ENCODE measurements at regions of chr14 and their contacts with region 1.

Region 1: GRCh38 chr14:68283378-68284123 is 464.0 kb downstream of the RAD51B start:
- DNase-seq: peak; percentile 95
- ATAC-seq: peak; percentile 57
- H3K4me3 ChIP-seq: no peak overlapping the region
- H3K27ac ChIP-seq: peak overlapping the region; percentile 92
- H3K4me1 ChIP-seq: peaks cover 89% of the 10 kb centered on the region
- H3K27me3 ChIP-seq: no peaks in the 10 kb centered on the region
- CTCF ChIP-seq: no peak
- EP300 ChIP-seq: peak; percentile 68 to 84
- POLR2A ChIP-seq: peak; percentile 78
- RAD21 ChIP-seq: peak; percentile 20; the same call in 1 of the 2 replicates

Region 2: DNA sequence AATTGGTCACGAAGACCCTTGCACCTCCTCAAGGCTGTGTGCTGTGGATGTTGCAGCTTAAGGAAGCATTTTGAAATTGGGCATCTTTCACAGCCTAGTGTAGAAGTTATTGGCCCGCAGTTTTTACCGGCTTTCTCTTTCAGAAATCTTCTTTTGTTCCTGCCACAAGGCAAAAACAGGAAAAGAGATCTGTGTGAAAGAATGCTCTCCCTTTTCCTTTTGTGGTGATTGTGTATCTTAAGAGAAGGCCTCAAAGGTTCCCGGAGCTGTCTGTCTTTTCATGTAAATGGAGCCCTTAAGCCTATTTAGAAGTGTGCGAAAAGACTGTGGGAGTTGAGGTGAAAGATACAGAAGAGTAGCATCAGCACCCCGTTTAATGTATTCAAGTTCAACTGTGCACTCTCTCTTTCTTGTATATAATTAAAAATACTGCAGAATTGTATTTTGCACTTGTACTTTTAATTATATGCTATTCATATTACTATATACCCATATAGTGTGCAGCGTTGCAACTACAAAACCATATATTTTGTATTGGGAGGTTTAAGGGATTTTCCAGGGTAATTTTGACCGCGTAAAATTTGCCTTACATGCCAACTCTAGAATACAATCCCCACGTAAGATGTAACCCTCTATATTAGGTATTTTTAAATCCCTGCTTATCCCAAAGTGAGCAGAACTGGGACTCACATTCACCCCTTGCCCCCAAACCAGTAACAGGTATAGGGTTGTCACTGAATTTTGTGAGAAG is 22.3 kb before region 1 on chr14:
- CTCF ChIA-PET with region 1: interaction called, 7 read pairs
- POLR2A ChIA-PET with region 1: interaction called, 6 read pairs
- RAD21 ChIA-PET with region 1: interaction called, 240 read pairs
- SMC1A ChIA-PET with region 1: interaction called, 106 read pairs
- in situ Hi-C with region 1: no loop called
- intact Hi-C with region 1: no loop called
- DNase-seq: no peak
- ATAC-seq: peak; percentile 60
- H3K4me3 ChIP-seq: peak overlapping the region; percentile 40; the same call in 1 of the 2 replicates
- H3K27ac ChIP-seq: peak overlapping the region; percentile 58
- H3K4me1 ChIP-seq: peaks cover 45% of the 10 kb centered on the region
- H3K27me3 ChIP-seq: no peaks in the 10 kb centered on the region
- CTCF ChIP-seq: no peak
- EP300 ChIP-seq: no peak
- POLR2A ChIP-seq: no peak
- RAD21 ChIP-seq: no peak

Region 3: DNA sequence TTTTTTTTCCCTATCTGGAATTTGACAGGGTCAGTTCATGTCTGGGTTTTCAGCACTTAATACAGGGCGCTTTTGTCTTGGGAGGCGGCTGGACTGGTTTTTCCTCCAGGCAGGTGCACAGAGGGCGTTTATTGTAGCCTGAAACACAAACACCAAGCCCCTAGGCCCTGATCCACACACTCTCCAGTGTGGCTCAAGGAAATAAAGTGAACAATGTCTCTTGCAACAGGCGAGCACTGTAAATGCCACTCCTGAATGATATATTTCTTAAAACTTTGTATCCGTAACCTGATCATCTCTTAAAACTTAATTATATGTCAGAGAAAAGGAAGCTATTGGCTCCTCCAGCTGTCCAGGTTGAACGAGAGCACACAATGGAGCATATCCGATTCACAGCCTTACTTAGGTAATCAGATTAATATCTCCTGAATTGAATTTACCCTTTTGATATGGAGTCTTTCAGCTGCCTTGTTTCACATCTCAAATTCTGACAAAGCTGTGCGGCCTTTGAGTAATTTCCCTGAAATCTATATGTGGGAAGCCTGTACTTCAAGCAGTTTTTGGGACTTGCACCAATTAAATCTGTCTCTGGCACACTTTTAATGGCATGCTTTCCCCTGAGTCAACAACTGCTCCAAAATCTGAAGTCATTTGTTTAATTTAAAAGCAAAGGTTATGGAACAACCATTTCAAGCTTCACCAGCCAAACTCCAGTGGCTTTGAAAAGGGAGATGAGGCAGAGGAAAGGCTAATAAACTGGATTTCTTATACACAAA is 23.7 kb after region 1 on chr14:
- CTCF ChIA-PET with region 1: interaction called, 73 read pairs
- POLR2A ChIA-PET with region 1: interaction called, 141 read pairs
- RAD21 ChIA-PET with region 1: interaction called, 343 read pairs
- SMC1A ChIA-PET with region 1: interaction called, 321 read pairs
- in situ Hi-C with region 1: no loop called
- intact Hi-C with region 1: loop called (anchors 1 kb)
- DNase-seq: no peak
- ATAC-seq: no peak
- H3K4me3 ChIP-seq: no peak overlapping the region; the same call in 1 of the 2 replicates
- H3K27ac ChIP-seq: peak overlapping the region; percentile 98
- H3K4me1 ChIP-seq: peaks cover 53% of the 10 kb centered on the region
- H3K27me3 ChIP-seq: no peaks in the 10 kb centered on the region
- CTCF ChIP-seq: no peak
- EP300 ChIP-seq: no peak
- POLR2A ChIP-seq: no peak
- RAD21 ChIP-seq: no peak

Region 4: GRCh38 chr14:68359837-68360552 is 76.4 kb after region 1 on chr14:
- CTCF ChIA-PET with region 1: interaction called, 6 read pairs
- POLR2A ChIA-PET with region 1: interaction called, 3 read pairs
- RAD21 ChIA-PET with region 1: interaction called, 46 read pairs
- SMC1A ChIA-PET with region 1: interaction called, 18 read pairs
- in situ Hi-C with region 1: no loop called
- intact Hi-C with region 1: no loop called
- DNase-seq: no peak
- ATAC-seq: peak; percentile 47
- H3K4me3 ChIP-seq: no peak overlapping the region
- H3K27ac ChIP-seq: peak overlapping the region; percentile 82
- H3K4me1 ChIP-seq: peaks cover 33% of the 10 kb centered on the region
- H3K27me3 ChIP-seq: no peaks in the 10 kb centered on the region
- CTCF ChIP-seq: no peak
- EP300 ChIP-seq: no peak
- POLR2A ChIP-seq: no peak
- RAD21 ChIP-seq: no peak

Region 5: GRCh38 chr14:68408680-68409079 is 125.1 kb after region 1 on chr14:
- CTCF ChIA-PET with region 1: interaction called, 7 read pairs
- POLR2A ChIA-PET with region 1: interaction called, 50 read pairs
- RAD21 ChIA-PET with region 1: interaction called, 131 read pairs
- SMC1A ChIA-PET with region 1: interaction called, 227 read pairs
- in situ Hi-C with region 1: no loop called
- intact Hi-C with region 1: no loop called
- DNase-seq: no peak
- ATAC-seq: peak; percentile 42
- H3K4me3 ChIP-seq: no peak overlapping the region
- H3K27ac ChIP-seq: no peak overlapping the region
- H3K4me1 ChIP-seq: peaks cover 39% of the 10 kb centered on the region
- H3K27me3 ChIP-seq: no peaks in the 10 kb centered on the region
- CTCF ChIP-seq: peak; percentile 25 to 54 (median 33); a peak in 5 of 6 replicates
- EP300 ChIP-seq: no peak
- POLR2A ChIP-seq: no peak
- RAD21 ChIP-seq: peak; percentile 67

Region 6: DNA sequence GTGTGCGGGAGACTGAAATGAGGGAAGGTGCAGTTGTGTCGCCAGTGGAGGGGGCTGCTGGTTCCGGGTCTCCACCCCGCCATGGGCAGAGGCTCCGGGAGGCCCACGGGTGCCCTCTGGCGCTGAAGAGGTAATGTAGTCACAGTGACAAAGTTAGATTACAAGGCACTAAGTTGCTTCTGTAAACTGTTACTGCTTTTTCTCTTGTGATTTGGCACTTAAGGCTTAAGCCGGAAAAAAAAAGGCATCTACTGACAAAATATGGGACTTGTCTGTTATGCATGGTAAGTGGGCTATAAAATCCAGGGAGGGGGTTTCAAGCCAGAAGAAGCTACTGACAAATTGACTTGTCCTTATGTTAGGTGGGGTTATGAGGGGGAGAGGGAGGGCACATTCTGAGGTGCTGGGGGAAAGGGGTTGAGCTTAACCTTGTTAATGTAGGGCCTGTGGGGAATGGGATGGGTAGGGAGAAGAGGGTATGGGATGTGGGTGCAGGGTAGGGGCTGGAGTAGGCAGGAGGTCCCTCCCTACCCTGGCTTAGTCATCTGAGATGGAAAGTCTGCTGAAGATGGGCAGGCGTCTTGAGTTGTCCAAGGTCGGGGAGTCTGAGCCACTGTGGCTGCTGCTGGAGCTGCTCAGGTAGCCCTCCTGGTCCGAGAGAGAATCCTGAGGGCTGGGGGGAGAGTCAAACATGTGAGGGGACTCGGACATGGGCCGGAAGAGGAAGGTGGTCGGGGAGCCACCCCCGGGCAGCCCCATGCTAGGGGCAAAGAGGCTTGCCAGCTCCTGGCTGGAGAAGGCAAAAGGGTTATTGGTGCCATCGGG is 505.7 kb after region 1 on chr14:
- CTCF ChIA-PET with region 1: interaction called, 5 read pairs
- POLR2A ChIA-PET with region 1: interaction called, 6 read pairs
- RAD21 ChIA-PET with region 1: interaction called, 14 read pairs
- SMC1A ChIA-PET with region 1: interaction called, 3 read pairs
- in situ Hi-C with region 1: loop called (anchors 10 kb)
- intact Hi-C with region 1: no loop called
- DNase-seq: no peak
- ATAC-seq: peak; percentile 39
- H3K4me3 ChIP-seq: peak overlapping the region; percentile 97
- H3K27ac ChIP-seq: peak overlapping the region; percentile 100
- H3K4me1 ChIP-seq: peaks cover 32% of the 10 kb centered on the region
- H3K27me3 ChIP-seq: no peaks in the 10 kb centered on the region
- CTCF ChIP-seq: peak; percentile 76 to 93 (median 85); a peak in 5 of 6 replicates
- EP300 ChIP-seq: no peak
- POLR2A ChIP-seq: peak; percentile 77
- RAD21 ChIP-seq: peak; percentile 80